ENCODE measurements at regions of chr6 and their contacts with region 1.

Region 1: DNA sequence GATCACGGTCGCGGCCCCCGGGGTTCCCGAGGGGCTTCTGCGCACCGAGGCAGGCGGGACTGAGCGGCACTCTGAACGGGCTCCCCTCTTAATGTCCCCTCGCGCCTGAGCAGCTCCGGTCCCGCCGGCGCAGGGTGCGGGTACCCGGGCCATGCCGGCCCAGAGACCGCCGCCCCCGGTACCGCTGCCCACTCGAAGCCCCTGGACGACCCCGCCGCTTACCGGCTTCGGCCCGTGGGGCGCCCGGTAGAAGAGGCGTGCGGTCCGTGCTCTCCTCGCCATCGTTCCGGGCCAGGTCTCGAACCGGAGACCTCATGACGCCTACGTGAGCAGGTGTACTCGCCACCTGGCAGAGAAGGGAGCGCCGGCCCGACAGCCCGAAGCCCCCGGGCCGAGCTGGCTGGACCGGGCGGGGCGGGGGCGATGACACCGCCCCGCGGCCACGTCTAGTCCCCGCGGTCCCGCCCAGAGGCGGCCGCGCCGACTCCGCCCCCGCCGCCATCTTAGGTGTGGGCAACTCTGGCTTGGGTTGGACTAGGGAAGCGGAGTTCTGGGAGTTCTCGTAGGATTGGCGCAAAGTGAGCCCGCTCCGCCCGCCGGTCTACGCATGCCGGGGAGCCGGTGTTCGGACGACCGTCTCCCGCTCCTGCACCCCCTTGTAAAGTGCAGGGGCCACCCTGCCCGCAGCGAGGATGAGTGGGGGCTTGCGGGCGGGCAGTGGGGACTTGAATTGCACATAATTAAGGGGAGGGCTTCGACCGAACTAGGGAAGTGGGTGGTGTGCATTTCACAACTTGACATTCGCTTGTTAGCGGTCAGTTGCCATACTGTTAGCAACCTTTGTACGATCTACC is at the start of gene SLC17A5:
- DNase-seq: peak; percentile 92
- H3K4me3 Mint-ChIP-seq: peak within 1 kb of the TSS; percentile 99
- H3K27ac Mint-ChIP-seq: peak within 1 kb of the TSS; percentile 98
- H3K4me1 Mint-ChIP-seq: peaks cover 38% of the 10 kb centered on the region
- H3K27me3 Mint-ChIP-seq: no peaks in the 10 kb centered on the region
- total RNA-seq, gene SLC17A5: 5.1 to 5.4 TPM

Region 2: DNA sequence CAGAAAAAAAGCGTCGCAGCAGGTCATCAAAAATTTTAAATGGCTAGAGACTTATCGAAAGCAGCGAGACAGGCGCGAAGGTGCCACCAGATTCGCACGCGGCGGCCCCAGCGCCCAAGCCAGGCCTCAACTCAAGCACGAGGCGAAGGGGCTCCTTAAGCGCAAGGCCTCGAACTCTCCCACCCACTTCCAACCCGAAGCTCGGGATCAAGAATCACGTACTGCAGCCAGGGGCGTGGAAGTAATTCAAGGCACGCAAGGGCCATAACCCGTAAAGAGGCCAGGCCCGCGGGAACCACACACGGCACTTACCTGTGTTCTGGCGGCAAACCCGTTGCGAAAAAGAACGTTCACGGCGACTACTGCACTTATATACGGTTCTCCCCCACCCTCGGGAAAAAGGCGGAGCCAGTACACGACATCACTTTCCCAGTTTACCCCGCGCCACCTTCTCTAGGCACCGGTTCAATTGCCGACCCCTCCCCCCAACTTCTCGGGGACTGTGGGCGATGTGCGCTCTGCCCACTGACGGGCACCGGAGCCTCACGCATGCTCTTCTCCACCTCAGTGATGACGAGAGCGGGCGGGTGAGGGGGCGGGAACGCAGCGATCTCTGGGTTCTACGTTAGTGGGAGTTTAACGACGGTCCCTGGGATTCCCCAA is 133.0 kb before region 1 on chr6 and contains the start of gene EEF1A1:
- CTCF ChIA-PET with region 1: interaction called, 11 read pairs
- POLR2A ChIA-PET with region 1: interaction called, 8 read pairs
- DNase-seq: peak; percentile 100
- H3K4me3 Mint-ChIP-seq: peak within 1 kb of the TSS; percentile 87
- H3K27ac Mint-ChIP-seq: peak within 1 kb of the TSS; percentile 99
- H3K4me1 Mint-ChIP-seq: peaks cover 52% of the 10 kb centered on the region
- H3K27me3 Mint-ChIP-seq: no peaks in the 10 kb centered on the region
- total RNA-seq, gene EEF1A1: 7,789 to 8,433 TPM

Region 3: GRCh38 chr6:73631849-73632248 is 21.9 kb before region 1 on chr6:
- CTCF ChIA-PET with region 1: interaction called, 15 read pairs
- POLR2A ChIA-PET with region 1: no interaction called
- DNase-seq: no peak
- H3K4me3 Mint-ChIP-seq: no peak overlapping the region
- H3K27ac Mint-ChIP-seq: no peak overlapping the region
- H3K4me1 Mint-ChIP-seq: no peaks in the 10 kb centered on the region
- H3K27me3 Mint-ChIP-seq: no peaks in the 10 kb centered on the region

Region 4: GRCh38 chr6:73713410-73714147 is 59.8 kb after region 1 on chr6:
- CTCF ChIA-PET with region 1: no interaction called
- POLR2A ChIA-PET with region 1: no interaction called
- DNase-seq: no peak
- H3K4me3 Mint-ChIP-seq: peak overlapping the region; percentile 2
- H3K27ac Mint-ChIP-seq: peak overlapping the region; percentile 64
- H3K4me1 Mint-ChIP-seq: peaks cover 19% of the 10 kb centered on the region
- H3K27me3 Mint-ChIP-seq: no peaks in the 10 kb centered on the region

Measured in activated CD4-positive, alpha-beta T cell treated with anti-CD3 and anti-CD28 coated beads, Interleukin-2, amount 10 ng/mL, durations not matched to agents 7 days and 5 days (primary cell).